Tibial artery (tissue), 4 donors: ENCODE measurements at regions of chr1 and their contacts with region 1.

Region 1: DNA sequence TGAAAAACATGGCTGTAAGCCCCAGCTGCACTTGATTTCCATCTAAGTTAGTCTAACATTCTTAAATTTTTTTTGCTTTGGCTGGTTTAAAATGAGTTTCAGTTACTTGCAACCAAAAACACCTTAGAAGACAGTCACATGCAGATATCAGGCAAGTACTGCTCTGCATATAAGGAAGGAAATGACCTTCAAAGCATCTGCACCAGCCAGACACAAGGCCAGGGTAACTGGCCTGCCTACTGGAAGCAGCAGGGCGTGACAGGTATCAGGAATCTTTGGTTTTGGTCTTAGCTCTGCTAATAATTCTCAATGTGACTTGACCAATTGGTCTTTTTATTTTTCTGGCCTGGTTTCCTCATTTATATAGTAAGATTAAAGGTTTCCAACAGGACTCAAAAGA is 33.5 kb downstream of the SCYL3 start:
- DNase-seq: no peak
- H3K4me3 ChIP-seq: no peak overlapping the region
- H3K27ac ChIP-seq: no peak overlapping the region
- H3K4me1 ChIP-seq: no peaks in the 10 kb centered on the region
- H3K27me3 ChIP-seq: no peaks in the 10 kb centered on the region
- CTCF ChIP-seq: no peak

Region 2: DNA sequence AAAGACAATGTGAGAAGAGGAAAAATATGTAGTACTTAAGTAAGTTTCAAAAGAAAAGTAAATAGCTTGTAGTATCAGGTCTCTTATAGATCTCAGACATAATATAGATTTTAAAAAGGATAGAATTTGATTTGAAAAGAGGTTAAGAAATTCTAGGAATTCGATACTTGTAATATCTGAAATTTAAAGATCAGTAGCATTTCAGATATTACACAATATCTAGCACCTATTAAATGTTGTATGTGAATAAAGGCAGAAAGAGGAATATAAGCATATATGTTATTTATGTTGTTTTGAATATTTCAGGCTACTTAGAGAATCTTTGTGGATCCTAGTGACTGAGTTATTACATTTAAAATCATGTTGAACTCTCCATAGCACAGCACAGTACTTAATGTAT is 30.5 kb before region 1 on chr1:
- intact Hi-C with region 1: loop called (anchors 5 kb)
- DNase-seq: no peak
- H3K4me3 ChIP-seq: no peak overlapping the region
- H3K27ac ChIP-seq: no peak overlapping the region
- H3K4me1 ChIP-seq: no peaks in the 10 kb centered on the region
- H3K27me3 ChIP-seq: no peaks in the 10 kb centered on the region
- CTCF ChIP-seq: no peak